ENCODE measurements at regions of chr2 and their contacts with region 1.

Region 1: GRCh38 chr2:121530212-121530705 is 421 bp upstream of the RNU4ATAC start:
- DNase-seq: peak; percentile 83
- H3K4me3 Mint-ChIP-seq: peak overlapping the region; percentile 86
- H3K27ac Mint-ChIP-seq: peak overlapping the region; percentile 99
- H3K4me1 Mint-ChIP-seq: peaks cover 37% of the 10 kb centered on the region
- H3K27me3 Mint-ChIP-seq: no peaks in the 10 kb centered on the region
- CTCF ChIP-seq: no peak

Region 2: DNA sequence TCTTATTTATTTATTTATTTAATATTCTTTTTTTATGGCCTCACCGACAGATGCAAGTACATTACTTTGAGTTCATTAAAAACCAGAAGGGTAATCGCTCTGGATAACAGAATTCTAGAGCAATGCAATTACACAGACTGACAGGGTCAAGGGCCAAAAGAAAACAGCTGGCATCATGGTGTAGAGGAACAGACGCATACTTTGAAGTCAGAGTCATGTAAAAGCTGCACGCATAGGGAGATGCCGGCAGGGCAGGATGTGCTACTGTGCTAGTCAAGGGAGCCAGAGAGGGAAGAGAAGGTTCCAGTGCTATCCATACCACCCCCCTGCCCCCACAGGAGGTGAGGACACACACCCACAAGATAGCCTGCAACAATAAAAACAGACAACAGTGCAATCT is 130.1 kb before region 1 on chr2:
- CTCF ChIA-PET with region 1: interaction called, 7 read pairs
- POLR2A ChIA-PET with region 1: interaction called, 4 read pairs
- intact Hi-C with region 1: loop called (anchors 1 kb)
- DNase-seq: no peak
- H3K4me3 Mint-ChIP-seq: no peak overlapping the region
- H3K27ac Mint-ChIP-seq: no peak overlapping the region
- H3K4me1 Mint-ChIP-seq: no peaks in the 10 kb centered on the region
- H3K27me3 Mint-ChIP-seq: no peaks in the 10 kb centered on the region
- CTCF ChIP-seq: no peak

Region 3: DNA sequence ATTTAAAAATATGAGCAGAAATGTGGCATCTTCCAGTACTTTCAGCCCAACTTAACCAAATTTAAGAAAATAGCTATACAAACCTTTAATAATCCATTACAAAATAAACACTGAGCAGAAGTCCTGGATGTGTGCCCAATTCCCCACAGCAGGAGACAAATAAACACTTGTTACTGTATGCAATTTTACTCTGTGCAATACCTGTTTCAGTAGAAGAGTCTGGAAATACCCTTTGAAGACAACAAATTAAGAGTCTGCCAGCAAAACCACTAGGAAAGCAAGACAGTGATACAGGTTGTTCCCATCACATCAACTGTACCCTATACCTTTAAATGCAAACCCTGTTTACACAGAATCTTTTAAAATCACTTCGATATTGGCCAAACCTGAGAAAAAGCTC is 41.0 kb before region 1 on chr2:
- CTCF ChIA-PET with region 1: interaction called, 4 read pairs
- POLR2A ChIA-PET with region 1: interaction called, 109 read pairs
- intact Hi-C with region 1: no loop called
- DNase-seq: peak; percentile 92
- H3K4me3 Mint-ChIP-seq: no peak overlapping the region
- H3K27ac Mint-ChIP-seq: no peak overlapping the region
- H3K4me1 Mint-ChIP-seq: peaks cover 27% of the 10 kb centered on the region
- H3K27me3 Mint-ChIP-seq: no peaks in the 10 kb centered on the region
- CTCF ChIP-seq: no peak

Region 4: GRCh38 chr2:121596221-121597080 is 66.2 kb after region 1 on chr2:
- CTCF ChIA-PET with region 1: interaction called, 18 read pairs
- POLR2A ChIA-PET with region 1: interaction called, 4 read pairs
- intact Hi-C with region 1: no loop called
- DNase-seq: peak; percentile 65
- H3K4me3 Mint-ChIP-seq: no peak overlapping the region
- H3K27ac Mint-ChIP-seq: peak overlapping the region; percentile 55
- H3K4me1 Mint-ChIP-seq: peaks cover 23% of the 10 kb centered on the region
- H3K27me3 Mint-ChIP-seq: no peaks in the 10 kb centered on the region
- CTCF ChIP-seq: peak; percentile 36

Region 5: GRCh38 chr2:121649596-121650314 is 119.5 kb after region 1 on chr2:
- CTCF ChIA-PET with region 1: interaction called, 9 read pairs
- POLR2A ChIA-PET with region 1: interaction called, 141 read pairs
- intact Hi-C with region 1: no loop called
- DNase-seq: peak; percentile 97
- H3K4me3 Mint-ChIP-seq: peak overlapping the region; percentile 89
- H3K27ac Mint-ChIP-seq: peak overlapping the region; percentile 97
- H3K4me1 Mint-ChIP-seq: peaks cover 25% of the 10 kb centered on the region
- H3K27me3 Mint-ChIP-seq: no peaks in the 10 kb centered on the region
- CTCF ChIP-seq: no peak

Region 6: GRCh38 chr2:121699421-121700333 is 169.4 kb after region 1 on chr2:
- CTCF ChIA-PET with region 1: interaction called, 8 read pairs
- POLR2A ChIA-PET with region 1: interaction called, 14 read pairs
- intact Hi-C with region 1: no loop called
- DNase-seq: peak; percentile 90
- H3K4me3 Mint-ChIP-seq: no peak overlapping the region
- H3K27ac Mint-ChIP-seq: peak overlapping the region; percentile 64
- H3K4me1 Mint-ChIP-seq: peaks cover 32% of the 10 kb centered on the region
- H3K27me3 Mint-ChIP-seq: no peaks in the 10 kb centered on the region
- CTCF ChIP-seq: no peak

Region 7: DNA sequence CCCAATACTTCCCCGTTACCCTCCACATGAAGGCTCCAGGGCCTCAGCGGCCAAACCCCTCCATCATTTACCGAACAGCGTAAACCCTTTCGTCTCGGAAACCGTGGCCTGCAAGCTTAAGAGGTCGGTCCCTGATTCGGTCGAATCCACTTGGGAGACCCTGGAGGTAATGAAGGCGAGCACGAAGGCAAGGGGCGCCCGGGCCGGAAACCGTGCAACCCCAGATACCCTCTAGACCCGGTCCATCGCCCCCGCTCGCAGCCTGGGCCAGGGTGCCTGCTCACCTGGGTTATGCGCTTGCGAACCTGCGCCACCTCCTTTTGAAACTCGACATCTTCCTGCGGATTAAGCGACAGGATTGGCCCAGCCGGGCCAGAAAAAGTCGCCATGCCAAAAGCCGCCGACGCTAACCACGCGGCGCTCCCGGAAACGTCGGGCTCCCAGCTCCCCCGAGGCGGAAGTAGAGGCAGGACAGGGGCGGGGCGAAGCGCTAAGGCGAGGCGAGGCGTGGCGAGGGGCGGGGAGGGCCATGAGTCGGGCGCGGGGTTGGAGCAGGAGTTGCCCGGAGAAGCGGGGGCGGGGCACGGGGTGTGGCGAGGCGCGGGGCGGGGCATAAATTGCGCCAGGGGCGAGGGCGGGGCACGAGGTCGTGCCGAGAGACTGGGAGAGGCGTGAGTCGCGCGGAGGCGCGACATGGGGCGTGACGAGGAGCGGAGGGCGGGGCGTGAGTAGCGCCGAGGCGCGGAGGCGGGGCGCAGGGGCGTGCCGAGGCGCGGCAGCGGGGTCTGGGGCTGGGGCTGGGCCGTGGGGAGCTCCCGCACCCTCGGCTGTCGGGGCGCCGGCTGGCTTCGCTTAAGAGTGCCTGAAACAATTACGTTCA is 206.4 kb after region 1 on chr2 and contains the start of gene NIFK:
- CTCF ChIA-PET with region 1: interaction called, 4 read pairs
- POLR2A ChIA-PET with region 1: interaction called, 46 read pairs
- intact Hi-C with region 1: no loop called
- DNase-seq: peak; percentile 98
- H3K4me3 Mint-ChIP-seq: peak within 1 kb of the TSS; percentile 95
- H3K27ac Mint-ChIP-seq: peak within 1 kb of the TSS; percentile 90
- H3K4me1 Mint-ChIP-seq: peaks cover 7% of the 10 kb centered on the region
- H3K27me3 Mint-ChIP-seq: no peaks in the 10 kb centered on the region
- CTCF ChIP-seq: no peak
- total RNA-seq, gene NIFK: 111 and 171 TPM in 2 replicates

Region 8: GRCh38 chr2:122167515-122167914 is 637.3 kb after region 1 on chr2:
- CTCF ChIA-PET with region 1: no interaction called
- POLR2A ChIA-PET with region 1: no interaction called
- intact Hi-C with region 1: no loop called
- DNase-seq: no peak
- H3K4me3 Mint-ChIP-seq: no peak overlapping the region
- H3K27ac Mint-ChIP-seq: no peak overlapping the region
- H3K4me1 Mint-ChIP-seq: no peaks in the 10 kb centered on the region
- H3K27me3 Mint-ChIP-seq: no peaks in the 10 kb centered on the region
- CTCF ChIP-seq: no peak